Esophagus muscularis mucosa (tissue), 4 donors: ENCODE measurements at regions of chr14 and their contacts with region 1.

Region 1: GRCh38 chr14:104708606-104709268 is 15.3 kb upstream of the ADSS1 start:
- DNase-seq: no peak
- H3K4me3 ChIP-seq: no peak overlapping the region
- H3K27ac ChIP-seq: no peak overlapping the region
- H3K4me1 ChIP-seq: peaks cover 11 to 31% (median 20%) of the 10 kb centered on the region in 4 donors
- H3K27me3 ChIP-seq: no peaks in the 10 kb centered on the region
- CTCF ChIP-seq: peak in 2 of 3 experiments; percentile 96 to 97
- EP300 ChIP-seq: no peak
- POLR2A ChIP-seq: no peak

Region 2: GRCh38 chr14:104650057-104650981 is 58.4 kb before region 1 on chr14:
- intact Hi-C with region 1: loop called (anchors 1 kb)
- DNase-seq: no peak
- H3K4me3 ChIP-seq: peak overlapping the region; percentile 43 to 58 (median 48)
- H3K27ac ChIP-seq: no peak overlapping the region
- H3K4me1 ChIP-seq: peaks cover 10 to 11% (median 11%) of the 10 kb centered on the region in 4 donors
- H3K27me3 ChIP-seq: peaks cover 0 to 16% (median 0%) of the 10 kb centered on the region in 4 donors
- CTCF ChIP-seq: peak; percentile 93 to 100 (median 99)
- EP300 ChIP-seq: no peak
- POLR2A ChIP-seq: no peak

Region 3: GRCh38 chr14:104665657-104666522 is 42.8 kb before region 1 on chr14:
- intact Hi-C with region 1: loop called (anchors 5 kb)
- DNase-seq: no peak
- H3K4me3 ChIP-seq: no peak overlapping the region
- H3K27ac ChIP-seq: peak overlapping the region in 3 of 4 donors; percentile 3 to 55 (median 23)
- H3K4me1 ChIP-seq: peaks cover 5 to 11% (median 6%) of the 10 kb centered on the region in 4 donors
- H3K27me3 ChIP-seq: peaks cover 0 to 28% (median 0%) of the 10 kb centered on the region in 4 donors
- CTCF ChIP-seq: peak; percentile 15 to 43 (median 29)
- EP300 ChIP-seq: no peak
- POLR2A ChIP-seq: no peak

Region 4: DNA sequence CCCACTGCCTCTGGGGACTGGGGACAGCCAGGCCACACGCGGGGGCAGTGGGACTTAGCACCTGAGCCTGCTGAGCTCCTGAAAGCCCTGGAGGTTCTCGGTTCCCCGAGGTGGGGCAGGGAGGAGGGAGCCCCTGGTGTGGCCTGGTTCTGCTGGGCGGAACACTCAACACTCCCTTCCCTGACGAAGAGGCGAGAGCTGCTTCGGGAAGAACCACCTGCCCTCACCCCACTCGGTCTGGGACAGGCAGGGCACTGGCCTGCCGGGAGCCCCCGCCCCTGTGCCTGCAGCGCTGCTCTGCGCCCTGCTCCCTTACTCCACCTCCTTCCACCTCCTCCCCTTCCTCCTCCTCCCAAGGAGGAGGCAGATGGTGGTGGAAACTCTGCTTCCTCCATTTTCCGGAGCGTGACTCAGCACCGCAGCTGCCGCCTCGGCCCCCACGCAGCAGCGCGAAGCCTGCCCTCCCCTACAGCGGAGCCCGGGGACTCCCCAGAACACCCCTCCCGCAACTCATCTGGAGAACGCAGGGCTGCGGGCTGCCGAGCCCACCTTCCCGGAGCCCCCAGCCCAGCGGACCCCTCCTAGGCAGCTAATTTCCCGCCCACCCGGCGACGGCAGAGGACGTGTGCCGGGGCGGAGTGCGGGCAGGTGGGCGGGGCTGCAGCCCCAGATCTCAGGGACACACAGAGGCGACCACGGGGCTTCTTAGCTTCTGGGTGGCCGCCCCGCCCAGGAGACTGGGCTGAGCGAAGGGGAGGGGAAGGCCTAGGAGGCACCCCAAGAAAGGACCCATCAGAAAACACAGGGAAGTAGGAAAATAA is 31.0 kb before region 1 on chr14:
- intact Hi-C with region 1: no loop called
- DNase-seq: peak; percentile 94
- H3K4me3 ChIP-seq: peak overlapping the region; percentile 60 to 69 (median 64)
- H3K27ac ChIP-seq: peak overlapping the region; percentile 83 to 90 (median 86)
- H3K4me1 ChIP-seq: peaks cover 58 to 63% (median 60%) of the 10 kb centered on the region in 4 donors
- H3K27me3 ChIP-seq: peaks cover 0 to 5% (median 0%) of the 10 kb centered on the region in 4 donors
- CTCF ChIP-seq: no peak
- EP300 ChIP-seq: no peak
- POLR2A ChIP-seq: no peak

Region 5: DNA sequence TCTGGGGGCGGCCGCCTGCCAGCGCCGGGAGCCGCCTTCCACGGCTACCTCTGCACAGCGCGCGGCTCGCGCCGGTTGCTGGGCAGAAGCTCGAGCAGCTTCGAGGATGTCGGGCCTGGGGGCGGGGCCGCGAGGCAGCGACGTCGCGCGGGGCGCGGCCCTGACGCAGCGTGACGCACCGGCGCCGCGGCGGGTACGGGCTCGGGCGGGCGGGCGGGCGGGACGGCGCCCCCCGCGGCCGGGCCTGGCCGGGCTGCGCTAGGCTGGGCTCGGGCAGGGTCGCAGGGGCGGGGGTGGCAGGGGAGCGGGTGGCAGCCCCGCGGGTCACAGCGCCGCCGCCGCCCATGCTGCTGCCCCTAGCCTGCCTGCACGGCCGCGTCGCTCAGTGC is 539.6 kb after region 1 on chr14 and contains the start of gene BTBD6:
- intact Hi-C with region 1: no loop called
- DNase-seq: peak; percentile 94
- H3K4me3 ChIP-seq: peak within 1 kb of the TSS; percentile 63 to 94 (median 66)
- H3K27ac ChIP-seq: peak within 1 kb of the TSS; percentile 86 to 96 (median 92)
- H3K4me1 ChIP-seq: peaks cover 18 to 35% (median 32%) of the 10 kb centered on the region in 4 donors
- H3K27me3 ChIP-seq: no peaks in the 10 kb centered on the region
- CTCF ChIP-seq: no peak
- EP300 ChIP-seq: no peak
- POLR2A ChIP-seq: no peak
- total RNA-seq, gene BTBD6: 56.1 to 72.5 (median 69.4) TPM